ENCODE measurements at regions of chr11 and their contacts with region 1.

Region 1: DNA sequence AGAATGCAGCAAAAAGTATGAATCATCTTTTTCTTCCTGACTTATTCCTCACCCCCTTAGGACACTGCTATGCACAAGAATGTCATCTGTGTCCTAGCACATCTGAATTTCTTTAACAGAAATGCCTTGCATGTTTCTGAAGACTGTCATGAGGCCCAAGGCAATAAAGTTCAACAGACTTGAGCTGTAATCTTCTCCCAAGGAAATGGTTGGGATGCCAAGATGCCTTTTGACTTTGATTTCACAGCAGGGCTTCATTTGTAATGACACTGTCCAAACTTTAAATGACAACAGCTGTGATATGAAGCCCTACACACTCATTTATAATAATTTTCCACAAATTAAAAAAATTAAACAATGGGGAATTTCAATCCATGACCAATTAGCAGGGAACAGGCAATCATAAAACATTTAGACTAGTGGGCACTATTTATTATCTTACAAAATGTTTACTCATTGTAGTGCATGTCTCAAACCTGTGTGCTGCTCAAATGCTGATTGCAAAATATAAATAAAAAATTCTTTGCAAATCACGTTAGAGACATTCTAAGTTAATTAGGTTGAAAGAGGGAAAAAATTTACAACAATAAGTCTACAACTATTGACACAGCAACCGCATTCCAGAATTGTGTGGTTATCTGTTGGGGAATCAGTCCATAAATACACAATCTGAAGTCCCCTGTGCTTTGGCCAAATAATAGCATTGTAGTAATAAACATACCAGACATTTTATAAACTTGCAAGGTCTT is 242.3 kb downstream of the SWAP70 start:
- DNase-seq: peak; percentile 71
- H3K4me3 ChIP-seq: no peak overlapping the region
- H3K27ac ChIP-seq: peak overlapping the region; percentile 86
- H3K4me1 ChIP-seq: peaks cover 30% of the 10 kb centered on the region
- H3K27me3 ChIP-seq: no peaks in the 10 kb centered on the region
- CTCF ChIP-seq: no peak
- POLR2A ChIP-seq: no peak

Region 2: DNA sequence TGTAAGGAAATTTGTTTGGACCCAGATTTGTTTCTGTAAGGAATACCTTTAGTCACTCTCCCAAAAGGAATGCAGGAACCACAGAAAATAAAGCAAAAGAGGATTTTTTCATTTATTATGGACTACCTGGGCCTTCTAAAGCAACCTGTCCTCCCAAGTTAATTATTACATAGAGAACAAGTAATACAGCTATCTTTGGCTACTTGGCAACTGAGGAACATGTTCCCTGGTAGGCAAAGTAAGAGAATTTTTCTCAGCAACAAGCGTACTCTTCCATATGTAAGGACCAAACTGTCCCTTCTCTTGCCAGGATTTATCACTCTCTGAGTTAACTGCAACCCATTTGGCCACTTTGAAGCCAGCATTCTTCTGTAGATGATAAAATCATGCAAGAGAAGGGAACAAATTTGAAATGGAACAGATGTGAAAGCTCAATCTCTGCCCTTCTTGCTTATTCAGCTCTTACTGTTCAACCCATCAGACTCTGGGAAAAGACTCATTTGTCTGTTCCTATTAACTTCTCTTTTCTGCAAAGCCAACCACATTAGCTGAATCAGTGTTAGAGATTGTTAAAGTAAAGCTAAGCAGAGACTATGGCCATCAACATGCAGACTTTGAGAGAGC is 52.2 kb before region 1 on chr11:
- CTCF ChIA-PET with region 1: interaction called, 5 read pairs
- POLR2A ChIA-PET with region 1: no interaction called
- dilution Hi-C with region 1: no loop called
- intact Hi-C with region 1: loop called (anchors 2 kb)
- DNase-seq: no peak
- H3K4me3 ChIP-seq: no peak overlapping the region
- H3K27ac ChIP-seq: no peak overlapping the region
- H3K4me1 ChIP-seq: peaks cover 46% of the 10 kb centered on the region
- H3K27me3 ChIP-seq: no peaks in the 10 kb centered on the region
- CTCF ChIP-seq: no peak
- POLR2A ChIP-seq: no peak

Region 3: GRCh38 chr11:9962722-9963121 is 56.5 kb after region 1 on chr11:
- CTCF ChIA-PET with region 1: no interaction called
- POLR2A ChIA-PET with region 1: no interaction called
- dilution Hi-C with region 1: no loop called
- intact Hi-C with region 1: loop called (anchors 1 kb)
- DNase-seq: no peak
- H3K4me3 ChIP-seq: no peak overlapping the region
- H3K27ac ChIP-seq: no peak overlapping the region
- H3K4me1 ChIP-seq: no peaks in the 10 kb centered on the region
- H3K27me3 ChIP-seq: no peaks in the 10 kb centered on the region
- CTCF ChIP-seq: no peak
- POLR2A ChIP-seq: no peak

Region 4: DNA sequence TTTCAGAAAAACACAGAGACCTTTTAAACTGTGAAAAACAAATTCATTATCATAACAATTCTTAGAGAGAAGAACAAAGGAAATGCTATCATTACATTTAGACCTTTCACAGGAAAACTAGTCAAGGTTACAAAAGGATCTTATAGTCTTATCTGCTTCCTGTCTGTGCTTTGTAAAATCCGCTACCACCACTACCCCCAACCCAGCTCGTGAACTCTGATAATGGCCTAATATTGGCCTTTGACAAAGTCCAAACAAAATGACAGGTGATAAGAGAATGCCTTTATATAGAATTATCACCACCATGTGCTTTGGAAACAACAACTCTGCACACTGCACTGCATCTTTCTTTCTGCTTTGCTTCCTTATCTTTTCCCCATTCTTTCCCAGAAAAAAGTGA is 115.3 kb after region 1 on chr11:
- CTCF ChIA-PET with region 1: no interaction called
- POLR2A ChIA-PET with region 1: no interaction called
- dilution Hi-C with region 1: no loop called
- intact Hi-C with region 1: loop called (anchors 1 kb)
- DNase-seq: peak; percentile 89
- H3K4me3 ChIP-seq: no peak overlapping the region
- H3K27ac ChIP-seq: peak overlapping the region; percentile 16
- H3K4me1 ChIP-seq: peaks cover 31% of the 10 kb centered on the region
- H3K27me3 ChIP-seq: no peaks in the 10 kb centered on the region
- CTCF ChIP-seq: no peak
- POLR2A ChIP-seq: peak; percentile 68

Region 5: DNA sequence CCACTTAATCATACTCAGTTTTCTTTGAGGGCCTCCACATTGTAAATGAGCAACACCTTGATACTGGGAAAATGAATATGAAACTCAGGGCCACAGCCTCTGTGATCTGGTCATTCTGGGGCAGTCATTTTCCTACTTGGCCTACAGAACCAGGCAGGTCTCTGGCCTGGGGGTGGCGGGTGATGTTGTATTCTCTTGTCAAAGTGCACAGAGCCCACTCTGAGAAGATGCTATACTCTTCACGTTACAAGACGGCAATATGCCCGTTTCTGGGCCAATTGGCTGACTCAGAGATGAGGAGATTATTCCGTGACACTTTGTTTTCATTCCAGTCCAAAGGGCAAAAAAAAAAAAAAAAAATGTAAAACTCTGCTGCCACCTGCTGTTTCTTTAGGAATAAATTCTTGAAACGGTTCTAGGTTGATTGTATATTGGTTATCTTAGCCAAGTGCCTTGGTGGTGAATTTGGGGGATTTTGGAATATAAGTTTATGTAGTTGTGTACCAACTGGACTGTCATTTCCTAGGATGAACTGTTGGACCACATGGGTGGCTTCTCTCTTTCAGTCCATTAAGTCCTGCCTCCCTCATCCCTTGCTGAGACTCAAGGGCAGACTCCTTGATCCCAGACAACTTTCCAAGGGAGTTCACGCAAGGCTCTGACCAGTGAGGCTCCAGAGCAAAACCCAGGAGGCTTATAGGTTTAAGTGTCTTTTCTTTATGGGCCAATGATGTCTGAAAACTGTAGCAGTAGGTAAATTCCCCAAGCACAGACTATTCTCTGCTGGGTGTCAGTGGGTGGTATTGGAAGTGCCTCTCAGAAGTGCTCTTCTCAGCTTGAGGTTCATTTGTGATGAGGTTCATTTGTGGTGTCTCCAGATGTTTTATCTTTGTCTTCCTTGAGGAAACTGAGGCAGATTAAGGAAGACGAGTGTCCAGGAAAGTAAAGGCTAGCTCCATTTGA is 416.9 kb after region 1 on chr11:
- CTCF ChIA-PET with region 1: no interaction called
- POLR2A ChIA-PET with region 1: no interaction called
- dilution Hi-C with region 1: no loop called
- intact Hi-C with region 1: no loop called
- DNase-seq: peak; percentile 92
- H3K4me3 ChIP-seq: no peak overlapping the region
- H3K27ac ChIP-seq: peak overlapping the region; percentile 28
- H3K4me1 ChIP-seq: peaks cover 57% of the 10 kb centered on the region
- H3K27me3 ChIP-seq: no peaks in the 10 kb centered on the region
- CTCF ChIP-seq: peak; percentile 28 to 46
- POLR2A ChIP-seq: no peak